ENCODE measurements at regions of chr1 and their contacts with region 1.

Region 1: GRCh38 chr1:160124705-160125478 is 9.3 kb downstream of the ATP1A2 start:
- DNase-seq: no peak
- H3K4me3 ChIP-seq: no peak overlapping the region
- H3K27ac ChIP-seq: no peak overlapping the region
- H3K4me1 ChIP-seq: peaks cover 0 to 6% (median 0%) of the 10 kb centered on the region in 4 experiments; a peak in 2 of 7 replicates
- H3K27me3 ChIP-seq: no peaks in the 10 kb centered on the region
- CTCF ChIP-seq: peak in 2 of 3 experiments; percentile 25 to 39; a peak in 3 of 4 replicates
- EP300 ChIP-seq: no peak
- POLR2A ChIP-seq: no peak
- RAD21 ChIP-seq: peak; percentile 30 to 47; a peak in 3 of 4 replicates

Region 2: DNA sequence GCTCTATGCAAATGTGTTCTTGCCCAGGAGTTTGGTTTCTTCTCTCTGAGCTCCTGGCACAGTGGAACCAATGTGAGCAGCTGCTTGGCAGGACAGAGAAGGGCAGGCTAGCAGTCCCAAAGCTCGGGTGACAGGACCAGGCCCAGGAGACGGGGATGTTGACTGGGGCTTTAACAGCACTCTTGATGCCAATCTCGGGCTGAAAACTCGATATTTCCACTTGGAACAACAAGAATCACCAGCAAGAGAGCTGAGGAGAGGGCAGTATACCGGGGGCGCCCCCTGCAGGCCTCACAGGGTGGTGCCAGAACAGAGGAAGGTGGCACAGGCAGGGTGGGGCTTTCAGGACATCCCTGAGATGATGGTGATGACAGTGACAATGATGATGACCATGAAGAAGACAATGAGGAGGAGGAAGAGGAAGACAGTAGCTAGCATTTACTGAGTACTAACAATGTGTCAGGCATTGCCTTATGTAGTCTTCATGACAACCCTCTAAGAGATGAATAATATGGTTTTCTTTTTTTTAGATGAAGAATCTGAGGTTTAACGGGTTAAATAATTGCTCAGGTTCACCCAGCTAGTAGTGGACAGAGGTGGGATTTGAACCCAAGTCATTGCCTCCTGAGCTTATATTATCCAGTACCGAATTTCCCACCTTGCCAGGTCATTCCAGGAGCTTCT is 46.2 kb before region 1 on chr1:
- CTCF ChIA-PET with region 1: interaction called, 13 read pairs
- POLR2A ChIA-PET with region 1: no interaction called
- DNase-seq: peak in 1 of 2 experiments; percentile 90
- H3K4me3 ChIP-seq: no peak overlapping the region
- H3K27ac ChIP-seq: no peak overlapping the region
- H3K4me1 ChIP-seq: no peaks in the 10 kb centered on the region
- H3K27me3 ChIP-seq: peaks cover 0 to 33% (median 20%) of the 10 kb centered on the region in 4 experiments; a peak in 6 of 7 replicates
- CTCF ChIP-seq: peak; percentile 91 to 95 (median 93)
- EP300 ChIP-seq: no peak
- POLR2A ChIP-seq: no peak
- RAD21 ChIP-seq: peak; percentile 75 to 84

Region 3: DNA sequence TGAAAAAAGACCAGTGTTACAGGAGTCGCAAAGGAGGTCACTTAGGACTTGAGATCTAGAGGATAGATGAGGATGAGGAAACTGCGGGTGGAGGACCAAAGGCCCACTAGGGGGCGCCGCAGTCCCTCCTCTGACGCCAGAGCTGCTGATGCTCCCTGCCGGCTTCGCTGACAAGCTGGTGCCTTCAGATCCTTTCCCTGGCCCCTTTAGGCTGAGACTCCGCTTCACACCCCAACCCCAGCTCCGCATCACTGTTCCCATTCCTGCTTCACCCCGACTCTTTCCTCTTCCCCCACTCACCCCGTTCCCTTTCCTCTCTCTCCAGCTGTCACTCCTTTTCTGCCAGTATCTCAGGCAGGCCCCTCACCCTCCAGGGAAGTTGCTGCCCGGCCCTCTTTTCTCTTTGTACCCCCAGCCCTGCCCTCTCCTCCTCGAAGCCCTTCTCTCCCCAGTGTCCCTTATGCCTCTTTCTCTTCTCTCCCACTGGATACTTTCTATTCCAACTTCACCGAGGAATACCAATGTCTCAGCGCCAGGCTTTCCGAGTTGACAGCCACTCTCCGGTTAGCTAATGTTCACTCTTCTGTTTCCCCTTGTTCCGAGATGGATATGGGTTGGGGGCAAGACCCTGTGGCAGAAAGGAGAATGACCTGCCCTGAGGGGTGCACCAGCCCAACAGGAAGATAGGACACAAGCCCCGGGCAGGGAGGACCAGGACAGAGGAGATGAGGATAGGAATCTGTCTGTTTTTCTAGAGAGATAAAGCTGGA is 39.0 kb before region 1 on chr1:
- CTCF ChIA-PET with region 1: interaction called, 18 read pairs
- POLR2A ChIA-PET with region 1: interaction called, 4 read pairs
- DNase-seq: peak; percentile 88 to 96
- H3K4me3 ChIP-seq: no peak overlapping the region
- H3K27ac ChIP-seq: no peak overlapping the region
- H3K4me1 ChIP-seq: peaks cover 0 to 5% (median 3%) of the 10 kb centered on the region in 4 experiments; a peak in 4 of 7 replicates
- H3K27me3 ChIP-seq: peaks cover 0 to 35% (median 27%) of the 10 kb centered on the region in 4 experiments; a peak in 6 of 7 replicates
- CTCF ChIP-seq: peak; percentile 91 to 99 (median 95)
- EP300 ChIP-seq: no peak
- POLR2A ChIP-seq: no peak
- RAD21 ChIP-seq: peak; percentile 83 to 88

Region 4: DNA sequence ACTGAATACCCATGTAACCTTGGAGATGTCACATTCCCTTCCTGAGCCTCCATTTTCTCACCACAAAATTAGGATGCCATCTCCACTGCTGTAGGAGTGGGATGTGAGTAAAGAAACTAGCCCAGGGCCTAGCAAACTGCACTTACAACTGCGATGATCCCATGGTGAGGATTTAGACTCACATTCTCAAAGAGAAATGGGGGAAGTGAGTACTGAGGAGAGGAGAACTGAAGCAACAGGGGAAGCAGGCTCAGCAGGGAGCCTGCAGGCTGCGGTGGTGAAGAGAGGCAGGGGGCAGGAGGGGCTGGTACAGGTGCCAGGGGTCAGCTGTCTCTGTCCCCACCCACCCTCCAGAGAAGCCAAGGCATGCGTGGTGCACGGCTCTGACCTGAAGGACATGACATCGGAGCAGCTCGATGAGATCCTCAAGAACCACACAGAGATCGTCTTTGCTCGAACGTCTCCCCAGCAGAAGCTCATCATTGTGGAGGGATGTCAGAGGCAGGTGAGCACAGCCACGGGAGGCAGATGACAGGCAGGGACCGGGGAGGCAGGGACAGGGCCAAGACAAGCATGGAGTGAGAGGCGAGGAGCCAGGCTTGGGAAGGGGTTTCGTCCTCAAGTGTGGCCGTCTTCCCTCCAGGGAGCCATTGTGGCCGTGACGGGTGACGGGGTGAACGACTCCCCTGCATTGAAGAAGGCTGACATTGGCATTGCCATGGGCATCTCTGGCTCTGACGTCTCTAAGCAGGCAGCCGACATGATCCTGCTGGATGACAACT is 10.1 kb after region 1 on chr1:
- CTCF ChIA-PET with region 1: interaction called, 13 read pairs
- POLR2A ChIA-PET with region 1: interaction called, 56 read pairs
- DNase-seq: no peak
- H3K4me3 ChIP-seq: no peak overlapping the region
- H3K27ac ChIP-seq: no peak overlapping the region
- H3K4me1 ChIP-seq: no peaks in the 10 kb centered on the region
- H3K27me3 ChIP-seq: no peaks in the 10 kb centered on the region
- CTCF ChIP-seq: no peak
- EP300 ChIP-seq: no peak
- POLR2A ChIP-seq: no peak
- RAD21 ChIP-seq: no peak

Region 5: DNA sequence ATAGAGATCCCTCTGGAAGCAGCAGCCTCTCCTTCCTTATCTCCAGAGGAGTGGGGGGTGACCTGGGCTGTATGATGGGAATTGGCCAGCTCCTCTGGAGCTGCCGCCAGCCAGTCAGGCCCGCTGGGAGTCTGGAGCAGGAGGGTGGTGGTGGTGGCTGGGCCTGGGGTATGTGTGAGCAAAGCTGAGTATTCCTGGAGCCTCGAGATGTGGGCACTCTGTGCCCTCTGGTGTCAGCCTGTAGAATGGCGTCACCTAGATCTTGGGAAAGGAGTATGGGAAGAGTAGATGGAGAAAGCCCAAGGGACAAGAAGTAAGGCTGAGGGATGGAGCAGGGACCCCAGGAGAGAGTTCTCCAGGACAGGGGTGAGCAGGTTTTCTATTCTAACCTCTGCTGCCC is 291.5 kb after region 1 on chr1:
- CTCF ChIA-PET with region 1: no interaction called
- POLR2A ChIA-PET with region 1: no interaction called
- DNase-seq: no peak
- H3K4me3 ChIP-seq: no peak overlapping the region
- H3K27ac ChIP-seq: no peak overlapping the region
- H3K4me1 ChIP-seq: peaks cover 1 to 2% (median 2%) of the 10 kb centered on the region in 4 experiments; a peak in 6 of 7 replicates
- H3K27me3 ChIP-seq: no peaks in the 10 kb centered on the region
- CTCF ChIP-seq: peak; percentile 63 to 76 (median 69)
- EP300 ChIP-seq: no peak
- POLR2A ChIP-seq: no peak
- RAD21 ChIP-seq: peak; percentile 81 to 88

Measured in H1 (cell line).